ENCODE measurements at regions of chr18 and their contacts with region 1.

Region 1: GRCh38 chr18:79484661-79485621 is 89.2 kb downstream of the NFATC1 start:
- DNase-seq: peak; percentile 94
- H3K4me3 ChIP-seq: no peak overlapping the region
- H3K27ac ChIP-seq: peak overlapping the region; percentile 97
- H3K4me1 ChIP-seq: peaks cover 19% of the 10 kb centered on the region
- H3K27me3 ChIP-seq: no peaks in the 10 kb centered on the region
- CTCF ChIP-seq: no peak
- POLR2A ChIP-seq: peak; percentile 70

Region 2: GRCh38 chr18:79405781-79406575 is 79.0 kb before region 1 on chr18:
- CTCF ChIA-PET with region 1: interaction called, 4 read pairs
- POLR2A ChIA-PET with region 1: no interaction called
- dilution Hi-C with region 1: no loop called
- intact Hi-C with region 1: loop called (anchors 2 kb)
- DNase-seq: peak; percentile 44
- H3K4me3 ChIP-seq: no peak overlapping the region
- H3K27ac ChIP-seq: peak overlapping the region; percentile 56
- H3K4me1 ChIP-seq: peaks cover 34% of the 10 kb centered on the region
- H3K27me3 ChIP-seq: no peaks in the 10 kb centered on the region
- CTCF ChIP-seq: no peak
- POLR2A ChIP-seq: no peak

Region 3: GRCh38 chr18:79458131-79458838 is 26.7 kb before region 1 on chr18:
- CTCF ChIA-PET with region 1: interaction called, 3 read pairs
- POLR2A ChIA-PET with region 1: no interaction called
- dilution Hi-C with region 1: no loop called
- intact Hi-C with region 1: loop called (anchors 1 kb)
- DNase-seq: peak; percentile 93
- H3K4me3 ChIP-seq: no peak overlapping the region
- H3K27ac ChIP-seq: peak overlapping the region; percentile 98
- H3K4me1 ChIP-seq: peaks cover 40% of the 10 kb centered on the region
- H3K27me3 ChIP-seq: no peaks in the 10 kb centered on the region
- CTCF ChIP-seq: no peak
- POLR2A ChIP-seq: peak; percentile 66

Region 4: GRCh38 chr18:79496978-79497637 is 12.2 kb after region 1 on chr18:
- CTCF ChIA-PET with region 1: no interaction called
- POLR2A ChIA-PET with region 1: no interaction called
- dilution Hi-C with region 1: no loop called
- intact Hi-C with region 1: loop called (anchors 1 kb)
- DNase-seq: no peak
- H3K4me3 ChIP-seq: no peak overlapping the region
- H3K27ac ChIP-seq: peak overlapping the region; percentile 23
- H3K4me1 ChIP-seq: peaks cover 16% of the 10 kb centered on the region
- H3K27me3 ChIP-seq: no peaks in the 10 kb centered on the region
- CTCF ChIP-seq: no peak
- POLR2A ChIP-seq: no peak

Region 5: GRCh38 chr18:79507076-79507545 is 22.2 kb after region 1 on chr18:
- CTCF ChIA-PET with region 1: interaction called, 7 read pairs
- POLR2A ChIA-PET with region 1: interaction called, 10 read pairs
- dilution Hi-C with region 1: no loop called
- intact Hi-C with region 1: loop called (anchors 1 kb)
- DNase-seq: peak; percentile 96
- H3K4me3 ChIP-seq: no peak overlapping the region
- H3K27ac ChIP-seq: peak overlapping the region; percentile 88
- H3K4me1 ChIP-seq: peaks cover 31% of the 10 kb centered on the region
- H3K27me3 ChIP-seq: no peaks in the 10 kb centered on the region
- CTCF ChIP-seq: no peak
- POLR2A ChIP-seq: peak; percentile 66

Region 6: DNA sequence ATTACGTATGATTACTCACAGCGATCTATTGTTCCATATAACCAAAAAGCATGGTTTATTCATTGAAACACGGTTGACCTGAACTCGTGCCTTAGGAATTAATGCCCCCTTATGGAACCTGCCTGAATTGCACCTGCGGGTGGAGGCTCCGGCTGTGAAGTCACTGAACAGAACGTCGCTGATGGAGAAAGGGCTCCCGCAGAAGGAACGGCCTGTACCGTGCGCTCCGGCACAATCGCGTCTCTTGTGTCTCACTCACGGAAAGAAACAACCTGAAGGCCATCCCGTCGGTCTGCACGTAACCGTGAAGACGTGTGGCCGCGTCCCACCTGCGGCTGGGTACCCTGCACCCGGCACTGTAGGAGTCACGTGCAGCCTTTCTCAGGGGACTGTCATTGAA is 43.9 kb after region 1 on chr18:
- CTCF ChIA-PET with region 1: interaction called, 3 read pairs
- POLR2A ChIA-PET with region 1: no interaction called
- dilution Hi-C with region 1: no loop called
- intact Hi-C with region 1: loop called (anchors 1 kb)
- DNase-seq: peak; percentile 80
- H3K4me3 ChIP-seq: no peak overlapping the region
- H3K27ac ChIP-seq: no peak overlapping the region
- H3K4me1 ChIP-seq: peaks cover 7% of the 10 kb centered on the region
- H3K27me3 ChIP-seq: no peaks in the 10 kb centered on the region
- CTCF ChIP-seq: peak; percentile 82 to 86
- POLR2A ChIP-seq: no peak